Activated naive CD4-positive, alpha-beta T cell treated with anti-CD3 and anti-CD28 coated beads for 36 hours (primary cell): ENCODE measurements at regions of chr22 and their contacts with region 1.

Region 1: GRCh38 chr22:29603358-29604075 is at the start of gene NF2:
- DNase-seq: peak; percentile 99
- H3K4me3 Mint-ChIP-seq: peak within 1 kb of the TSS; percentile 92
- H3K27ac Mint-ChIP-seq: peak within 1 kb of the TSS; percentile 97
- H3K4me1 Mint-ChIP-seq: peaks cover 22% of the 10 kb centered on the region
- H3K27me3 Mint-ChIP-seq: no peaks in the 10 kb centered on the region
- total RNA-seq, gene NF2: 29.8 to 30.0 TPM

Region 2: DNA sequence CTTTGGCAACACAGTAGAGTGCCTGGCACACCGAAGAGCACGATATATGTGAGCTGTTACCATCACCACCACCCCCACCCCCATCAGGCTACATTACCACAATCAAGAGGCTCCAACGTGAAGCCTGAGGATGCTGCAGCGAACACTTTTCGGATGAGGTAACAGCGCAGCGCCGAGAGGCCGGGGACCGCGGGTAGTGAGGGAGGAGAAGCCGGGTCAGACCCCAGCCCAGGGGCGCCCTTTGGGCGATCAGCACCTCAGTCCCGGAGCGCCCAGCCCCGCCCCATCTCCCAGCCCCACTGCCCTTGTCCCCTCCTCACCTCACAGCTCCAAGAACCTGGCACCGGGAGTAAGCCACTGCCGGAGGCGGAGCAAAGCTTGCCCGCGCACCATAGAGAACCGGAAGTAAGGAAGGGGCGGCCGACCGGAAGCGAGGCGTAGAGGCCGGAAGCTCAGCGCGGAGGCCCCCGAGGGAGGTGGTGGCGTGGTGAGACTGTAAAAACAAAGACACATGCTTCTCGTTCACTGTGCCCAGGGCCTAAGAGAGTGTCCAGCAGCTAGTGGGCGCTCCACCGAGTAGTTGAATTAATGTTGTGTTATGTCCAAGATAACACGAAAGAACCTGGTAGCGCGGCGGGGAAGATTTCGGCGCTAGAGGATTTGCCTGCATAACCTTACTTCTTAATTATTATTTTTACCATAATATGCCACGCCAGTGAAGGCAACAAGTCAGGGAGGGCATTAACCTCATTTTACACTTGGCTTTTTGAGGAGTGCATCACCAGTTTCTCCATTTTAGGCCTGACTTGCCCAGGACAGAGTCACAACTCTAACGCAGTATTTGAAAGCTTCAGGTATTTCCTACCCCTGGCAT is 49.9 kb before region 1 on chr22 and contains the start of gene THOC5:
- CTCF ChIA-PET with region 1: no interaction called
- intact Hi-C with region 1: loop called (anchors 1 kb)
- DNase-seq: peak; percentile 93
- H3K4me3 Mint-ChIP-seq: peak within 1 kb of the TSS; percentile 97
- H3K27ac Mint-ChIP-seq: peak within 1 kb of the TSS; percentile 80
- H3K4me1 Mint-ChIP-seq: peaks cover 25% of the 10 kb centered on the region
- H3K27me3 Mint-ChIP-seq: no peaks in the 10 kb centered on the region
- total RNA-seq, gene THOC5: 54.8 to 55.1 TPM

Region 3: GRCh38 chr22:29587938-29588699 is 15.4 kb before region 1 on chr22:
- CTCF ChIA-PET with region 1: interaction called, 8 read pairs
- intact Hi-C with region 1: loop called (anchors 1 kb)
- DNase-seq: no peak
- H3K4me3 Mint-ChIP-seq: no peak overlapping the region
- H3K27ac Mint-ChIP-seq: no peak overlapping the region
- H3K4me1 Mint-ChIP-seq: peaks cover 8% of the 10 kb centered on the region
- H3K27me3 Mint-ChIP-seq: no peaks in the 10 kb centered on the region

Region 4: GRCh38 chr22:29625090-29625825 is 21.7 kb after region 1 on chr22:
- CTCF ChIA-PET with region 1: interaction called, 16 read pairs
- intact Hi-C with region 1: loop called (anchors 1 kb)
- DNase-seq: peak; percentile 59
- H3K4me3 Mint-ChIP-seq: no peak overlapping the region
- H3K27ac Mint-ChIP-seq: no peak overlapping the region
- H3K4me1 Mint-ChIP-seq: peaks cover 70% of the 10 kb centered on the region
- H3K27me3 Mint-ChIP-seq: no peaks in the 10 kb centered on the region

Region 5: GRCh38 chr22:29766632-29767170 is 163.2 kb after region 1 on chr22 and contains the start of gene ZMAT5:
- CTCF ChIA-PET with region 1: no interaction called
- intact Hi-C with region 1: loop called (anchors 1 kb)
- DNase-seq: peak; percentile 97
- H3K4me3 Mint-ChIP-seq: peak within 1 kb of the TSS; percentile 96
- H3K27ac Mint-ChIP-seq: peak within 1 kb of the TSS; percentile 91
- H3K4me1 Mint-ChIP-seq: peaks cover 33% of the 10 kb centered on the region
- H3K27me3 Mint-ChIP-seq: no peaks in the 10 kb centered on the region
- total RNA-seq, gene ZMAT5: 14.3 to 15.3 TPM

Region 6: DNA sequence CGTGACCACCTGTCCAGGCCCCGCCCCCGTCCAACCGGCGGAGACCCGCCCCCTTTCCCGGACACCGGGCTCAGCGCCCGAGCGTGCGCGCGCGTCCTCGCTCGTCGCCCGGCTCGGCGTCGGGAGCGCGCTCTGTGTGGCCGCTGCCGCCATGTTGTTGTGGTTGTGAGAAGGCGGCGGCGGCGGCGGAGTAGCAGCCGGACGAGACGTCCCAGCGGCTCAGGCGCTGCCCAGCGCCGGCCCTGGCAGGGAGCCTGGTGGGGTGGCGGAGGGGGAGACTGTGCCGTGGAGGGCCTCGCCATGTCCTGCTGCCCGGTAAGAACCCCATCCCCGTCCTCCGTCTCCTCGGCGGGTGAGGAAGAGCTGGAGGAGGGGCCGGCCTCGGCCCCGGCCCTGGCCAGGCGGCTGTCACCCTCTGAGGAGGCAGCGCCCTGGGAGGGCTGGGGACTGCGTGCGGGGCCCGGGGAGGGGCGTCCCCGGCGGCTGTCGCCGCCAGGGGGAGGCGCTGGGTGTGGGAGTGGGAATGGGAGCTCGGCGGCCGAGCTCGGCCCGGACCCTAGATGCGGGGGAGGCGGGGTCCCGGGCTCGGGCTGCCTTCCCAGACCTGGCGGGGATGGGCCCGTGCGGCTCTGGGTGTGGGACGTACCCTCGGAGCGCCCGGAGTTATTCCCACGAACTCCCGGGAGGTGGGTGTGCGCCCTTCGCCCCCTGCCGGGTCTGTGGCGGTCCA is 279.7 kb after region 1 on chr22 and contains the start of gene MTMR3:
- CTCF ChIA-PET with region 1: no interaction called
- intact Hi-C with region 1: loop called (anchors 5 kb)
- DNase-seq: peak; percentile 95
- H3K4me3 Mint-ChIP-seq: peak within 1 kb of the TSS; percentile 89
- H3K27ac Mint-ChIP-seq: peak within 1 kb of the TSS; percentile 78
- H3K4me1 Mint-ChIP-seq: peaks cover 6% of the 10 kb centered on the region
- H3K27me3 Mint-ChIP-seq: no peaks in the 10 kb centered on the region
- total RNA-seq, gene MTMR3: 26.0 to 27.1 TPM